Vagina (tissue), 2 donors: ENCODE measurements at regions of chrX and their contacts with region 1.

Region 1: GRCh38 chrX:22192417-22193060 is 80.2 kb upstream of the CBLL2 start:
- DNase-seq: no peak
- H3K4me3 ChIP-seq: no peak overlapping the region
- H3K27ac ChIP-seq: no peak overlapping the region
- H3K4me1 ChIP-seq: no peaks in the 10 kb centered on the region
- H3K27me3 ChIP-seq: no peaks in the 10 kb centered on the region
- CTCF ChIP-seq: peak; percentile 21 to 68 (median 46)
- POLR2A ChIP-seq: no peak

Region 2: DNA sequence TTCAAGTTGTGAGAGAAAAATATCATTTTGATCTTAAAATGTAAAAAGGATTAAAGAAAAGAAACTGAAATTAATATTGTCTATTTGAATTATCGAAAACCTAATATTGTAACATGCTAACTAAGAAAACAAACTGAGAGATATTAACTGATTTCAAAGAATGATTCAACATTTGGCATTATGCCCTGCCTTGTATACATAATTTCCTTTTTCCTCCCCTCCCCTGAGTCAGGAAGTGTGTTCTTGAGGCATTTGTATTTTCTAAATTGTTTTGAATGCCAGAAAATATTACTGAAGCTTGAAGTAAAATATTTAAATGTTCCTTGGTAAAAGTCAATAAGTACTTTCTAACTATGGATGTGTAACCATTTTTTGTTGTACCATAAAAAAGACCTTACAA is 1975.3 kb before region 1 on chrX:
- intact Hi-C with region 1: no loop called
- DNase-seq: no peak
- H3K4me3 ChIP-seq: no peak overlapping the region
- H3K27ac ChIP-seq: no peak overlapping the region
- H3K4me1 ChIP-seq: peaks cover 8% of the 10 kb centered on the region
- H3K27me3 ChIP-seq: no peaks in the 10 kb centered on the region
- CTCF ChIP-seq: no peak
- POLR2A ChIP-seq: no peak

Region 3: DNA sequence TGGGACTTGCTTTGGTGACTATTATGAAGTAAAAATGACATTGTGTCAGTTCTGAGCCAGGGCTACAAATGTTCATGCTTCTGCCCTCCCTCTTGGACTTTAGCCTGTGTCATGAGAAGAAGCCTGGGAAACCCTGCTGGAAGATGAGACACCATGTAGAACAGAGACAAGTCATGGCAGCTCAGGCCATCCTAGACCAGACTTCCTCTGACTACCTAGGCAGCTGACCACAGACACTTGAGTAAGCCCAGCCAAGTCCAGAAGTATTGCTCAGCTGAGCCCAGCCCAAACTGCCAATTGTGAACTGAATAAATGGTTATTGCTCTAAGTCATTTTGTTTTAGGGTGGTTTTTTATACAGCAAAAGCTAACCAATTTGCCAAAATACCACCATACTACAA is 1286.0 kb before region 1 on chrX:
- intact Hi-C with region 1: no loop called
- DNase-seq: no peak
- H3K4me3 ChIP-seq: no peak overlapping the region
- H3K27ac ChIP-seq: no peak overlapping the region
- H3K4me1 ChIP-seq: no peaks in the 10 kb centered on the region
- H3K27me3 ChIP-seq: no peaks in the 10 kb centered on the region
- CTCF ChIP-seq: no peak
- POLR2A ChIP-seq: no peak

Region 4: DNA sequence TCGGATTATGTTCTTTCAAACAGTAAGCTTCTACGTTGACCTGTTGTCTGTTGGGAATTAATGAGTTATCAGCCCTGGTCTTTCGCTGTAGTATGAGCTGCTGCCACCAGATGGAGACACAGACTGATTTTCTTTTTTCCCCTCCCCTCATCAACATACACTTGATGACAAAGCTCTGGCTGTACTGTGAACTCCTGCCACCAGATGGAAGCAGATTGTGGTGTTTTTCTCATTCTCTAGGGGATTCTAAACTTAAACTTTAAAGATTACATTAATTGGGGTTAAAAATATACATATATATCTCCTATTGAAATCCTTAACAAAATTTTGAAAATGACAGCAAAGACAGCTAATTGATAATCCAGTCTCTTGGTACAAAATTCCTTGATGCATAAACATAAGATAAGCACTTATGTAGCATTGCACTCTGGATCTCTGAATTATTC is 207.2 kb before region 1 on chrX:
- intact Hi-C with region 1: loop called (anchors 10 kb)
- DNase-seq: no peak
- H3K4me3 ChIP-seq: no peak overlapping the region
- H3K27ac ChIP-seq: no peak overlapping the region
- H3K4me1 ChIP-seq: no peaks in the 10 kb centered on the region
- H3K27me3 ChIP-seq: no peaks in the 10 kb centered on the region
- CTCF ChIP-seq: peak; percentile 47 to 94 (median 93)
- POLR2A ChIP-seq: no peak

Region 5: DNA sequence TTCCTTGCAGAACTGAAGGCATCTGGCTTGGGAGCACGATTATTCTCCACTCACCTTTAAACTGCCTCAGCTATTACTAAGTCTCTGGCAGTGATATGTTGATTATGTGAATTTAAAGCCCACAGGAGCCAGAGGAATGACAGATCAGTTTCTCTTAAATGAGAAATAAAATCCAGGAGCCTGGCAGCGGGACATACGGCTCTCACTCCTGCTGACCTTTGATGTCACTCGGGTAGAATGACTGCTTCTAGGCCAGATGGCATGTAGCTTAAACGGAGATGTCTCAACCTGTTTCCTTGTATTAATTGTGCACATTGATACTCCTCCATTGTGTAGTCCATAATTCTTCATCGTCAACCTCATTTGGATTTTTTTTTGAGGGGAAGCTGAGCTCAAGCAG is 76.2 kb after region 1 on chrX:
- intact Hi-C with region 1: no loop called
- DNase-seq: no peak
- H3K4me3 ChIP-seq: no peak overlapping the region
- H3K27ac ChIP-seq: no peak overlapping the region
- H3K4me1 ChIP-seq: no peaks in the 10 kb centered on the region
- H3K27me3 ChIP-seq: no peaks in the 10 kb centered on the region
- CTCF ChIP-seq: no peak
- POLR2A ChIP-seq: no peak